Mammary epithelial cell (primary cell): ENCODE measurements at regions of chr16 and their contacts with region 1.

Region 1: GRCh38 chr16:62190426-62190825 is 154.2 kb upstream of the CDH8 start:
- DNase-seq: peak; percentile 17
- H3K4me3 ChIP-seq: no peak overlapping the region
- H3K27ac ChIP-seq: no peak overlapping the region
- H3K4me1 ChIP-seq: no peaks in the 10 kb centered on the region
- H3K27me3 ChIP-seq: no peaks in the 10 kb centered on the region
- CTCF ChIP-seq: peak; percentile 83 to 84

Region 2: DNA sequence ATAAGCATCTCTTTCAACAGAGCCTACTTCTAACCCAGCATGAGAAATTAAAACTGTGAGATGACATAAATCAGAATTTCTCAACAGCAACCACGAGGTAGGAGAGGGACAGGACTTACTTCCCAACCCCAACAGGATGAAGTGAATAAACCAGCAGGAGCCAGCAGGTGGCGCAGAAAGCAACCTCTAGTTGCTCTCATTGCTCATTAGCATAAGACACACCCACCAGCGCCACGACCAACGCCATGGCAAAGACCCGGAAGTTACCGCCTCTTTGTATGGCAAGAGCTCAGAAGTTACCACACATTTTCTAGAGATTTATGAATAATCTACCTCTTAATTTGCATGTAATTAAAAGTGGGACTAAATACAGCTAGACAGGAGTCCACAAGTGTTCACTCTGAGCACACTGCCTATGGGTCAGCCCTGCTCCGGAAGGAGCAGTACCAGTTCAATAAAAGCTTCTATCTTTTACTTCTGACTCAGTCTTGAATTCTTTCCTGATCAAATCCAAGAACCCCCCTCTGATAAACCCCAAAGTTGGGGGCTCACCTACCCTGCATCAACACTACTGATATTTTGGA is 35.4 kb after region 1 on chr16:
- CTCF ChIA-PET with region 1: no interaction called
- dilution Hi-C with region 1: no loop called
- in situ Hi-C with region 1: no loop called
- intact Hi-C with region 1: no loop called
- DNase-seq: peak; percentile 80
- H3K4me3 ChIP-seq: no peak overlapping the region
- H3K27ac ChIP-seq: no peak overlapping the region
- H3K4me1 ChIP-seq: peaks cover 3% of the 10 kb centered on the region
- H3K27me3 ChIP-seq: no peaks in the 10 kb centered on the region
- CTCF ChIP-seq: peak; percentile 69 to 71

Region 3: DNA sequence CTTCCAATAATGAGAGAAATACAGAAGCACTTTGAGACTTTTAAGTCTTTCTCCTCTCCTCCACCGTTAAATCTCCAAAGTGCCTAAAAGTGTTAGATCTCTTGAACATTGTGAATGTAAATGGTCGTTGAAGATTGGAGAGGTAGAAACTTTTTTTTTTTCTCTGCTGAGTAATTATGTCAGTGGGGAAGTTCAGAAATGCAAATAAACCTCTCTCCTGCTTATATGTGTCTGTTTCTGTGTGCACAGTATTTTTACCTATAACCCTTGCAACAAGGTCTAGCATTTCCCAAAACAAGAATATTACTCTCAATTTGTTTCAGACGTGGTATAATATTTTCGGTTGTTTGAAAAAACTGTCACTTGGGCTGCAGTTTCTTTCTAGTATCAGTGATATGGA is 679.4 kb after region 1 on chr16:
- CTCF ChIA-PET with region 1: no interaction called
- dilution Hi-C with region 1: no loop called
- in situ Hi-C with region 1: no loop called
- intact Hi-C with region 1: loop called (anchors 10 kb)
- DNase-seq: no peak
- H3K4me3 ChIP-seq: no peak overlapping the region
- H3K27ac ChIP-seq: no peak overlapping the region
- H3K4me1 ChIP-seq: no peaks in the 10 kb centered on the region
- H3K27me3 ChIP-seq: no peaks in the 10 kb centered on the region
- CTCF ChIP-seq: no peak